Activated B cell treated with CpG ODN at 0.5 μM for 24 hours (primary cell): ENCODE measurements at regions of chr5 and their contacts with region 1.

Region 1: DNA sequence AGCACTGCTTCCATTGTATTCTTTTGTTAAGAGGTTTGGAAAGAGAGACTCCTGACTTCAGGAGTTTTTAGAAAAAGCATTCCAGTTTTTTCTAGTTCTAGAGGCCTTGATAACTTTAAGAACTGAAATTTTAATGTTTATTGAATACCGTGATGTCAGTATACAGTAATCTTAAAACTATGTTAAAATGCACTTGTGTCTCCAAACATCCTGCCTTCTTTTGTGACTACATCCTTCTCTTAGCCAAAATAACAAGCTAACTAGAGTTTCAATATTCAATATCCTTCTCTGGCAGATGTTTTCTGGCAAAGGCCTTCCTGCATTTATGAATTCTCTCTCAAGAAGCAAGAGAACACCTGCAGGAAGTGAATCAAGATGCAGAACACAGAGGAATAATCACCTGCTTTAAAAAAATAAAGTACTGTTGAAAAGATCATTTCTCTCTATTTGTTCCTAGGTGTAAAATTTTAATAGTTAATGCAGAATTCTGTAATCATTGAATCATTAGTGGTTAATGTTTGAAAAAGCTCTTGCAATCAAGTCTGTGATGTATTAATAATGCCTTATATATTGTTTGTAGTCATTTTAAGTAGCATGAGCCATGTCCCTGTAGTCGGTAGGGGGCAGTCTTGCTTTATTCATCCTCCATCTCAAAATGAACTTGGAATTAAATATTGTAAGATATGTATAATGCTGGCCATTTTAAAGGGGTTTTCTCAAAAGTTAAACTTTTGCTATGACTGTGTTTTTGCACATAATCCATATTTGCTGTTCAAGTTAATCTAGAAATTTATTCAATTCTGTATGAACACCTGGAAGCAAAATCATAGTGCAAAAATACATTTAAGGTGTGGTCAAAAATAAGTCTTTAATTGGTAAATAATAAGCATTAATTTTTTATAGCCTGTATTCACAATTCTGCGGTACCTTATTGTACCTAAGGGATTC is 43.1 kb downstream of the NDFIP1 start:
- DNase-seq: no peak
- ATAC-seq: peak; percentile 37
- H3K4me3 Mint-ChIP-seq: no peak overlapping the region
- H3K27ac Mint-ChIP-seq: no peak overlapping the region
- H3K4me1 Mint-ChIP-seq: no peaks in the 10 kb centered on the region
- H3K27me3 Mint-ChIP-seq: no peaks in the 10 kb centered on the region
- CTCF ChIP-seq: peak; percentile 44

Region 2: GRCh38 chr5:142324871-142325724 is 173.4 kb after region 1 on chr5 and contains the start of gene SPRY4:
- CTCF ChIA-PET with region 1: no interaction called
- POLR2A ChIA-PET with region 1: no interaction called
- intact Hi-C with region 1: loop called (anchors 5 kb)
- DNase-seq: peak; percentile 70
- ATAC-seq: peak; percentile 77
- H3K4me3 Mint-ChIP-seq: peak within 1 kb of the TSS; percentile 85
- H3K27ac Mint-ChIP-seq: no peak within 1 kb of the TSS
- H3K4me1 Mint-ChIP-seq: peaks cover 41% of the 10 kb centered on the region
- H3K27me3 Mint-ChIP-seq: peaks cover 66% of the 10 kb centered on the region
- CTCF ChIP-seq: no peak
- total RNA-seq, gene SPRY4: not detected in 2 replicates

Region 3: GRCh38 chr5:142548739-142549275 is 397.1 kb after region 1 on chr5:
- CTCF ChIA-PET with region 1: interaction called, 27 read pairs
- POLR2A ChIA-PET with region 1: no interaction called
- intact Hi-C with region 1: loop called (anchors 1 kb)
- DNase-seq: no peak
- ATAC-seq: no peak
- H3K4me3 Mint-ChIP-seq: no peak overlapping the region
- H3K27ac Mint-ChIP-seq: no peak overlapping the region
- H3K4me1 Mint-ChIP-seq: peaks cover 10% of the 10 kb centered on the region
- H3K27me3 Mint-ChIP-seq: peaks cover 19% of the 10 kb centered on the region
- CTCF ChIP-seq: no peak

Region 4: DNA sequence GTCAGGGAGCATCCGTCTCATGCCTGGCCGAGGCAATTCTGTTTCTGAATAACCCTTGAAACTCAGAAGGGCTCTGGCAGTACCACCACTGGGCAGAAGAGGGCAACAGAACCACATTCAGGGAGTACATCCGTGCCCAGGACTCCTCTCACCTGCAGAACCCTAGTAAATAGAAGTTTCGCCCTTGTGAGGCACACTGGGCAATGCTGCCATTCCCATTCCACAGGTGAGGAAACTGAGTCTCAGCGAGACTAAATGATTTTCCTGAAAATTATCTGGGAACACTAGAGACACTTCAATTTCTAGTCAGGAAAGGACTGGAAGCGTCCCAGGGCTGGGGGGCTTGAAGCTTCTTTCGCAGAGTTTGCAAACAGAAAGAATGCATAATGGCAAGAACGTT is 459.4 kb after region 1 on chr5:
- CTCF ChIA-PET with region 1: interaction called, 3 read pairs
- POLR2A ChIA-PET with region 1: no interaction called
- intact Hi-C with region 1: loop called (anchors 1 kb)
- DNase-seq: peak; percentile 29
- ATAC-seq: peak; percentile 77
- H3K4me3 Mint-ChIP-seq: no peak overlapping the region
- H3K27ac Mint-ChIP-seq: no peak overlapping the region
- H3K4me1 Mint-ChIP-seq: peaks cover 2% of the 10 kb centered on the region
- H3K27me3 Mint-ChIP-seq: peaks cover 19% of the 10 kb centered on the region
- CTCF ChIP-seq: no peak

Region 5: GRCh38 chr5:142655339-142656267 is 503.9 kb after region 1 on chr5:
- CTCF ChIA-PET with region 1: interaction called, 7 read pairs
- POLR2A ChIA-PET with region 1: no interaction called
- intact Hi-C with region 1: loop called (anchors 1 kb)
- DNase-seq: peak; percentile 48
- ATAC-seq: peak; percentile 56
- H3K4me3 Mint-ChIP-seq: no peak overlapping the region
- H3K27ac Mint-ChIP-seq: no peak overlapping the region
- H3K4me1 Mint-ChIP-seq: no peaks in the 10 kb centered on the region
- H3K27me3 Mint-ChIP-seq: peaks cover 21% of the 10 kb centered on the region
- CTCF ChIP-seq: peak; percentile 72

Region 6: DNA sequence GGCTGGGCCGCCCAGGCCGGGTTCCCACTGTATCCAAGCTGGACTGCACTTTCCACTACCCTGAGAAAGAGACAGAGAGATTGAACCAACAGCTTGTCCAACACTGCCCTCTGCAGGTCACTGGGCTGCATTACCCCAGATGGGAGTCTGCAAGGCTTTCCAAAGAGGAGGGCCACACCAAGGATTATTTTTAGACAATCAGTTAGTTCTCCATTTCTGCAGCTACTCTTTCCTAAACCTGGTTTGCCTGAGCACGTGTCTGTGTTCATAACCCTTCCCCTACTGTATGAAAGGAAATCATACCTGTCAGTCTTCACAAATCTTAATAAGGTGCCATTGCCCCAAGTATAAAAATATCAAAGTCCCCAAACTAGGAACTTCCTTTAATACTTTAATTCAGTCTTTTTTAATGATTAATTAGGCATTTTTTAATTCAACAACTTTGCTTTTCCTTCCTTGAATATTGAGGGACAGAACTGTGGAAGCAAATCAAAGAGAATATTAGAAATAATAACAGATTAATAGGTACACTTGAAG is 547.5 kb after region 1 on chr5:
- CTCF ChIA-PET with region 1: interaction called, 3 read pairs
- POLR2A ChIA-PET with region 1: no interaction called
- intact Hi-C with region 1: loop called (anchors 1 kb)
- DNase-seq: peak; percentile 33
- ATAC-seq: peak; percentile 73
- H3K4me3 Mint-ChIP-seq: no peak overlapping the region
- H3K27ac Mint-ChIP-seq: no peak overlapping the region
- H3K4me1 Mint-ChIP-seq: no peaks in the 10 kb centered on the region
- H3K27me3 Mint-ChIP-seq: peaks cover 17% of the 10 kb centered on the region
- CTCF ChIP-seq: peak; percentile 25

Region 7: DNA sequence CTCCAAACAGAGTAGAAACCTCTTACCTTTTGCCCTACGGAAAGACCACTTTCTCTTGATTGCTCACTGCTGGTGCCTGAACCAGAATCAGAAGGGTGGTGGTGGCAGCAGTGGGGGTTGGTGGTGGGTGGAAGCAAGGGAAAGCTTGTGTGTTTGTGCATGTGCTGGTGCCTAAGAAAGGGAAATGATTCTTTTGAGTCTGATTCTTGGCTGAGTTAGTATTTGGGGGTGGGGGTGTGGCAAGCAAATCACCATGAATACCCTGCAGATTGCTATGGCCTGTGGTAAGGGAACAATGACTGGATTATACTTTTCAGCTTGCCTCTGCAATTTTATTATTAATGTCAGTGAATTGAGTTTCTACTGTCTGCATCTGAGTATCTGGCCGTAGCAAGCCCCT is 725.1 kb after region 1 on chr5:
- CTCF ChIA-PET with region 1: no interaction called
- POLR2A ChIA-PET with region 1: no interaction called
- intact Hi-C with region 1: no loop called
- DNase-seq: no peak
- ATAC-seq: no peak
- H3K4me3 Mint-ChIP-seq: no peak overlapping the region
- H3K27ac Mint-ChIP-seq: no peak overlapping the region
- H3K4me1 Mint-ChIP-seq: peaks cover 7% of the 10 kb centered on the region
- H3K27me3 Mint-ChIP-seq: no peaks in the 10 kb centered on the region
- CTCF ChIP-seq: no peak

Region 8: GRCh38 chr5:142888469-142889085 is 736.9 kb after region 1 on chr5:
- CTCF ChIA-PET with region 1: no interaction called
- POLR2A ChIA-PET with region 1: no interaction called
- intact Hi-C with region 1: loop called (anchors 2 kb)
- DNase-seq: no peak
- ATAC-seq: no peak
- H3K4me3 Mint-ChIP-seq: no peak overlapping the region
- H3K27ac Mint-ChIP-seq: no peak overlapping the region
- H3K4me1 Mint-ChIP-seq: no peaks in the 10 kb centered on the region
- H3K27me3 Mint-ChIP-seq: no peaks in the 10 kb centered on the region
- CTCF ChIP-seq: peak; percentile 67